Heart right ventricle (tissue), 16 donors: ENCODE measurements at regions of chr3 and their contacts with region 1.

Region 1: GRCh38 chr3:136022529-136023263 is 57.2 kb downstream of the PPP2R3A start:
- DNase-seq: no peak
- ATAC-seq: peak; percentile 54 to 90 (median 82)
- H3K4me3 ChIP-seq: peak overlapping the region in 9 of 10 donors; percentile 16 to 55 (median 52)
- H3K27ac ChIP-seq: peak overlapping the region; percentile 59 to 91 (median 84)
- H3K4me1 ChIP-seq: peaks cover 0 to 48% (median 21%) of the 10 kb centered on the region in 9 donors
- H3K27me3 ChIP-seq: no peaks in the 10 kb centered on the region
- CTCF ChIP-seq: no peak

Region 2: GRCh38 chr3:135929670-135930069 is 93.0 kb before region 1 on chr3:
- intact Hi-C with region 1: loop called in 1 of 10 experiments (anchors 5 kb)
- DNase-seq: peak in 1 of 2 donors; percentile 67
- ATAC-seq: peak; percentile 50 to 88 (median 80)
- H3K4me3 ChIP-seq: no peak overlapping the region
- H3K27ac ChIP-seq: peak overlapping the region in 1 of 10 donors; percentile 22
- H3K4me1 ChIP-seq: peaks cover 0 to 16% (median 7%) of the 10 kb centered on the region in 9 donors
- H3K27me3 ChIP-seq: no peaks in the 10 kb centered on the region
- CTCF ChIP-seq: peak in 2 of 9 donors; percentile 15 to 16

Region 3: DNA sequence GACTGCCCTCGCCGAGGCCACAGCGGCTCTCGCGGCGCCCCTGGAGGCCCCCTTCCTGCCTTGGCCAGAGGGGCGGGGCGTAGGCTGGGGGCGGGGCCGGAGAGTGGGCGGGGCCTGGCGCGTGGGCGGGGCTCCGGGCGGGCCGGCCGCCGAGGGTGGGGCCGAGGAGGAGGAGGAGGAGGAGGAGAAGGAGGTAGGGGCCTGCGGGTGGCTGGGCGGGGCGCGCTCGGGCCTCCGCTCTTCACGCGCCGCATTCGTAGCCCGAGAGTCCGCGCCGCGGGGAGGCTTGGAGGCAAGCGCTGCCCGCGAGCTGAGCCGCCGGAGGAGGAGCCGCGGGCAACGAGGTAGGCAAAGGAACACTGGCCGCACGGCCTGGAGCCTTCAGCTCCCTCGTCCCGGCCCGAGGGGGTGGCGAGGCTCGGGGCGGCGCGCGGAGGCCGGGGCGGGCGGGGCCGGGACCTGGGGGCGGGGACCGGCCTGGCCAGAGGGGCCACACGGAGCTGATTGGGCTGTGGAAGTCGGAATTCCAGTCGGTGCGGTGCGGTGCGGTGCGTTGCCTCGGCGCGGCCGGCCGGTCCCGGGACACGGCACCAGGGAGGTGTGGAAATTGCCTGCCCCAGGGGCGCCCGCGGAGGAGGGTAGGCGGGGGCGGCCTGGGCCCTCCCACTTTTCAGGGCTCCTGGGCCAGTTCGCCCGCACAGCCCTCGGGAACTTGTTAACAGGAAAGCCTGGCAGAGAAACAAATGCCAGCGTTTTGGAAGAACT is 57.0 kb before region 1 on chr3 and contains the start of gene PPP2R3A:
- intact Hi-C with region 1: loop called in 5 of 10 experiments (anchors 1 to 5 kb)
- DNase-seq: peak; percentile 83 to 89
- ATAC-seq: peak; percentile 92 to 99 (median 96)
- H3K4me3 ChIP-seq: peak within 1 kb of the TSS; percentile 66 to 87 (median 76)
- H3K27ac ChIP-seq: peak within 1 kb of the TSS; percentile 42 to 94 (median 90)
- H3K4me1 ChIP-seq: peaks cover 0 to 35% (median 17%) of the 10 kb centered on the region in 9 donors
- H3K27me3 ChIP-seq: peaks cover 0 to 17% (median 0%) of the 10 kb centered on the region in 7 donors
- CTCF ChIP-seq: no peak
- total RNA-seq, gene PPP2R3A: 59.7 to 148 (median 115) TPM